ENCODE measurements at regions of chr12 and their contacts with region 1.

Region 1: DNA sequence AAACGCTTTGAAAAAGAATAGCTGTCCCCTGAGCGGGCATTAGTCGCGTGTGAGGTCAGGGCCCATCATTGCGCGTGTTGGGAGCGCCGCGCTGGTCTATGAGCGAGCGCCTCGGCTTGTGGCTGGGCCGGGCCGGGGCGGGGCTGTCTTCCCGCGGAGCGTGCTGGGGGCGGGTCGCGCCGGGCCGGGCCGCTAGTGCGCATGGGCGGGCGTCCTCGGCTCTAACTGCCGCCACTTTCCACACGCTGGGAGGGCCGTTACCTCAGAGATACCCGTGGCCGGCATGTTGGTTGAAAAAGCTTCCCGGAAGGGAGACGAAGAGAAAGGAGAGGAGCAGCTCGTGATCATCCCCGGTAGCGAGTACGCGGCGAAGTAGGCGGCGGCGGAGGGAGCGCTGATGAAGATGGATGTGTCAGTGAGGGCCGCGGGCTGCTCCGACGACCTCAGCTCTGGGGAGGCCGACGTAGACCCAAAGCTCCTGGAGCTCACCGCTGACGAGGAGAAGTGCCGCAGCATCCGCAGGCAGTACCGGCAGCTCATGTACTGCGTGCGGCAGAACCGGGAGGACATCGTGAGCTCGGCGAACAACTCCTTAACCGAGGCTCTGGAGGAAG is at the start of gene EID3:
- DNase-seq: peak; percentile 95
- H3K4me3 ChIP-seq: peak within 1 kb of the TSS; percentile 34 to 55 (median 48)
- H3K27ac ChIP-seq: peak within 1 kb of the TSS; percentile 81 to 88 (median 82)
- H3K4me1 ChIP-seq: peaks cover 0 to 78% (median 66%) of the 10 kb centered on the region in 4 donors
- H3K27me3 ChIP-seq: no peaks in the 10 kb centered on the region
- CTCF ChIP-seq: no peak
- EP300 ChIP-seq: no peak
- POLR2A ChIP-seq: no peak
- total RNA-seq, gene EID3: 4.6 to 21.9 (median 13.5) TPM

Region 2: GRCh38 chr12:104263580-104264358 is 39.9 kb before region 1 on chr12:
- intact Hi-C with region 1: no loop called
- DNase-seq: no peak
- H3K4me3 ChIP-seq: no peak overlapping the region
- H3K27ac ChIP-seq: no peak overlapping the region
- H3K4me1 ChIP-seq: no peaks in the 10 kb centered on the region
- H3K27me3 ChIP-seq: no peaks in the 10 kb centered on the region
- CTCF ChIP-seq: no peak
- EP300 ChIP-seq: no peak
- POLR2A ChIP-seq: no peak

Region 3: GRCh38 chr12:104347374-104348075 is 43.9 kb after region 1 on chr12:
- intact Hi-C with region 1: loop called (anchors 5 kb)
- DNase-seq: no peak
- H3K4me3 ChIP-seq: no peak overlapping the region
- H3K27ac ChIP-seq: no peak overlapping the region
- H3K4me1 ChIP-seq: peaks cover 0 to 26% (median 0%) of the 10 kb centered on the region in 4 donors
- H3K27me3 ChIP-seq: no peaks in the 10 kb centered on the region
- CTCF ChIP-seq: no peak
- EP300 ChIP-seq: no peak
- POLR2A ChIP-seq: no peak

Measured in sigmoid colon (tissue), 7 donors.